ENCODE measurements at regions of chr14 and their contacts with region 1.

Region 1: GRCh38 chr14:25400607-25401206 is 350.8 kb upstream of the STXBP6 start:
- DNase-seq: peak in 1 of 2 experiments; percentile 72
- H3K4me3 ChIP-seq: no peak overlapping the region
- H3K27ac ChIP-seq: no peak overlapping the region
- H3K4me1 ChIP-seq: no peaks in the 10 kb centered on the region
- H3K27me3 ChIP-seq: no peaks in the 10 kb centered on the region
- CTCF ChIP-seq: peak in 2 of 3 experiments; percentile 54 to 70; a peak in 3 of 4 replicates
- EP300 ChIP-seq: no peak
- POLR2A ChIP-seq: no peak
- RAD21 ChIP-seq: peak; percentile 60 to 65

Region 2: DNA sequence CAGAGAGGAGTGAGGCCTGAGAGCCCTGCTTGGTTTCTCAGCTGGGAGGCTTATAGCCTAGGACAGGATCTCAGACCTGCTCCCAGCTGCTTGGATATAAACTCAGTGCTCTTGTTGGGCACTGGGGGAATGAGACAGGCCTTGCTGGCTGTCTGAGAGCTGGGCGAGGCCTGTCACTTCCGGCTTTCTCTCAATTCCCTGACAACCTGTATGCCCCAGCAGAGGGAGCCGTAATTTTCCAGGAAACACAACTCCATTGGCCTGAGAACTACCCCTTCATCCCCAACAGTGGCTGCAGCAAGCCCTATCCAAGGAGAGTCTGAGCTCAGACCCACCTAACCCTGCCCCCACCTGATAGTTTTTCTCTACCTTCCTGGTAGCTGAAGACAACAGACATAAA is 92.5 kb before region 1 on chr14:
- CTCF ChIA-PET with region 1: interaction called, 28 read pairs
- POLR2A ChIA-PET with region 1: no interaction called
- DNase-seq: peak; percentile 15 to 64
- H3K4me3 ChIP-seq: no peak overlapping the region
- H3K27ac ChIP-seq: no peak overlapping the region
- H3K4me1 ChIP-seq: no peaks in the 10 kb centered on the region
- H3K27me3 ChIP-seq: no peaks in the 10 kb centered on the region
- CTCF ChIP-seq: peak; percentile 43 to 65 (median 54)
- EP300 ChIP-seq: no peak
- POLR2A ChIP-seq: no peak
- RAD21 ChIP-seq: peak; percentile 37 to 58

Region 3: DNA sequence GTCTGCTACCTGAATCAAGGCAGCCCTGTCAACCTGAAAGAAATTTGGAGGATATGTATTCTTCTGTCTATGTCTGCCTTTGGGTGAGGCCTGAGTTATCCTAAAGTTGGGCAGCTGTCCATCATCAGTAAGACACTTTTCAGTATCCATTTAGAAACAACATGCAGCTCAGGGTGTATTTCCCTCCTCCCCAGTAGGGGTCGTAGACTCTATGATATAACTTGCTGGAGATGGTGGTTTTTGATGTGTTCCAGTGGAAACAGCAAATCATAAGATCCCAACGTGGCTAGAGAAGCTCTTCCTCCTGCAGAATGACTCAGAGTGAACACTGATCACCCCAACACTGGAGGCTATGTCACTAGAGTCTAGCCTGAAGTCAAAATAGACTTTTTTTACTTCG is 19.2 kb before region 1 on chr14:
- CTCF ChIA-PET with region 1: interaction called, 23 read pairs
- POLR2A ChIA-PET with region 1: no interaction called
- DNase-seq: no peak
- H3K4me3 ChIP-seq: no peak overlapping the region
- H3K27ac ChIP-seq: no peak overlapping the region
- H3K4me1 ChIP-seq: no peaks in the 10 kb centered on the region
- H3K27me3 ChIP-seq: no peaks in the 10 kb centered on the region
- CTCF ChIP-seq: peak in 1 of 3 experiments; percentile 47; a peak in 1 of 4 replicates
- EP300 ChIP-seq: no peak
- POLR2A ChIP-seq: no peak
- RAD21 ChIP-seq: peak in 1 of 2 experiments; percentile 21; a peak in 1 of 4 replicates